H1 (cell line): ENCODE measurements at regions of chr6 and their contacts with region 1.

Region 1: DNA sequence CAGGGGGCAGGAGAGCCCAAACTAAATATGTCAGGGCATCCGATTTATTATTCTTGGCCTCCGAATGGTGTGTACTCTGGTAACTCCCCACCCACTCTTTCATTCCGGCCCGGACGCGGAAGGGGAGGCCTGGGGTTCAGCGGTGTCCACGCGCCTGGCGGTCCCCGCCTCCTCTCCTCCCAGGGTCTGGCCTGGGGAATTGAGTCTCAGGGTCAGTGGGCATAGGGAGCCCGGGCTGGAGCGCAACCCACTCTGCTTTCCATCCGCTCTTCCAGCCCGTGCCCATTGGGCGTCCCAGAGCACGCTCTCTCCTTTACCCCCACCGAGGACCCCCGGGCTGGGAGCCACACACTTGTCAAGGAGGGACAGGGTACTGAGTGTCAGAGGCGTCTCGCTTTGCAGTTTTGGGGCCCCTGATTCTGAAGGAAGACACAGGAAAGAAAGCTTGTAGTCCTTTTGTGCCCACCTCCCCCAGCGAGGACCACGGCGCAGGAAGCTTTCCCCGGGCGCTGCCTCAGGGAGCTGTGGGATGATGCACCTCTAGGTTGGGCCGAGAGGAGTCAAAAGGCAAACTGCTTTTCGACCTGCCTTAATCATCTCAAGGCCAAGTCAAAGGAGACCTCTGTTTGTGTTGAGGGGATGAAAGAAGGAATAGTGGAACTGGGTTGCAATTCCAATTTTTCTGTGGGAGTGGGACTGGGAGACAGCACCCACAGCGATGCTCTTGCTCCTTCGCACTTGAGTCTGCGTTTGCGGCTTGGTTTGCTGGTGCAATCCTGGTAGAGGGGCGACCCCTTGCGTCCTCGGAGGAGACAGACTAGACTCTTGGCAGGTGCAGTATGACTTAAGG is 2.5 kb downstream of the RSPO3 start:
- DNase-seq: peak in 1 of 2 experiments; percentile 89
- H3K4me3 ChIP-seq: peak overlapping the region; percentile 61 to 77 (median 70); a peak in 7 of 8 replicates
- H3K27ac ChIP-seq: no peak overlapping the region
- H3K4me1 ChIP-seq: peaks cover 0 to 16% (median 12%) of the 10 kb centered on the region in 4 experiments; a peak in 6 of 7 replicates
- H3K27me3 ChIP-seq: peaks cover 29 to 49% (median 42%) of the 10 kb centered on the region in 4 experiments
- CTCF ChIP-seq: peak; percentile 88 to 98 (median 91)
- EP300 ChIP-seq: no peak
- POLR2A ChIP-seq: no peak
- RAD21 ChIP-seq: peak; percentile 99 to 100

Region 2: GRCh38 chr6:127051571-127052260 is 69.3 kb before region 1 on chr6:
- CTCF ChIA-PET with region 1: no interaction called
- POLR2A ChIA-PET with region 1: no interaction called
- DNase-seq: no peak
- H3K4me3 ChIP-seq: no peak overlapping the region
- H3K27ac ChIP-seq: no peak overlapping the region
- H3K4me1 ChIP-seq: no peaks in the 10 kb centered on the region
- H3K27me3 ChIP-seq: no peaks in the 10 kb centered on the region
- CTCF ChIP-seq: no peak
- EP300 ChIP-seq: no peak
- POLR2A ChIP-seq: no peak
- RAD21 ChIP-seq: no peak

Region 3: DNA sequence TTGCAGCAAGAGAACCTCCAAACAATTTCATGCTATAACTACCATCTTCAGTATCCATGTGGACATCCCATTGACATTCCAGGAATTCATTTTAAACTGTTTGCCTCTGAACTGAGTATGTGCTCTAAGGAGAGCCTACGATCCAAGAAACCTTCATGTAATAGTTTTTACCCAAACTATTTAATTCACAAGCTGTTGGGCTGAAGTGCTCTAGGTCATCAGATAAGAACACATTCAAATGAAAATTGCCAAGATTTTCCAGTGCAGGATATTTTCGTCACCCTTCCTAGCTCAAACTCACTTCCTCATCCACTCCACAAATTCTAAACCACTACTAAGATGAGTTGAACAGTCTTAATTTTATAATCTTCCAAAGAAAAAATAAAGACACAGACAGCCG is 10.3 kb after region 1 on chr6:
- CTCF ChIA-PET with region 1: interaction called, 20 read pairs
- POLR2A ChIA-PET with region 1: no interaction called
- DNase-seq: no peak
- H3K4me3 ChIP-seq: no peak overlapping the region
- H3K27ac ChIP-seq: no peak overlapping the region
- H3K4me1 ChIP-seq: no peaks in the 10 kb centered on the region
- H3K27me3 ChIP-seq: no peaks in the 10 kb centered on the region
- CTCF ChIP-seq: no peak
- EP300 ChIP-seq: no peak
- POLR2A ChIP-seq: no peak
- RAD21 ChIP-seq: no peak

Region 4: GRCh38 chr6:127146932-127147331 is 25.9 kb after region 1 on chr6:
- CTCF ChIA-PET with region 1: no interaction called
- POLR2A ChIA-PET with region 1: no interaction called
- DNase-seq: peak in 1 of 2 experiments; percentile 10
- H3K4me3 ChIP-seq: peak overlapping the region in 1 of 4 experiments; percentile 4; a peak in 1 of 8 replicates
- H3K27ac ChIP-seq: no peak overlapping the region; the same call in 1 of the 2 replicates
- H3K4me1 ChIP-seq: peaks cover 0 to 8% (median 4%) of the 10 kb centered on the region in 4 experiments; a peak in 3 of 7 replicates
- H3K27me3 ChIP-seq: peaks cover 0 to 2% (median 0%) of the 10 kb centered on the region in 4 experiments; a peak in 1 of 7 replicates
- CTCF ChIP-seq: no peak
- EP300 ChIP-seq: no peak
- POLR2A ChIP-seq: no peak
- RAD21 ChIP-seq: no peak

Region 5: GRCh38 chr6:127383988-127384387 is 263.0 kb after region 1 on chr6:
- CTCF ChIA-PET with region 1: no interaction called
- POLR2A ChIA-PET with region 1: no interaction called
- DNase-seq: no peak
- H3K4me3 ChIP-seq: no peak overlapping the region
- H3K27ac ChIP-seq: no peak overlapping the region
- H3K4me1 ChIP-seq: no peaks in the 10 kb centered on the region
- H3K27me3 ChIP-seq: no peaks in the 10 kb centered on the region; a peak in 1 of 7 replicates
- CTCF ChIP-seq: no peak
- EP300 ChIP-seq: no peak
- POLR2A ChIP-seq: no peak
- RAD21 ChIP-seq: no peak